ENCODE measurements at regions of chrX and their contacts with region 1.

Region 1: DNA sequence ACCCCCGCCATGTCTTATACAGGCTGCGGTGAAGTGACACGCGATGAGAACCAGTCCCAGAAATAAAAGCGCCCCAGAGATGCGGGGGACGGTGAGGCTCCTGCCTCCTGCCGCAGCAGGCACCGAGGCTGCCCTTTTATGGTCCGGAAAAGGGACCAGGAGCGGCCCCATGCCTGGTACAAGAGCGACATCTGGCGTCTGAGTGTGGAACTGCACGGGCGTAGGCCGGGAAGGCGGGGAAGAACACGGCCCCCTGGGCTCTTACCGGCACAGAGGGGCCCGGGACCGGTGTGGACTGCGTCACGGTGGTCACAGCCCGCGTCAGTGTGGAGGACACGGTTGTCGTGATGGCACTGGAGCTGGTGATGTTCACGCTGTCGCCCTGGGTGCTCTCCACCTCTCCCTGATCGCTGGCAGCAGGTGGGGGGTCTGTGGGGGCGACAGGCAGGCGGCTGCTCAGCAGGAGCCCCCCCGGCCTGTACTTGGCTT is 8.9 kb upstream of the RENBP start:
- DNase-seq: peak; percentile 58 to 68
- ATAC-seq: peak; percentile 38 to 74
- H3K4me3 ChIP-seq: no peak overlapping the region
- H3K27ac ChIP-seq: peak overlapping the region in 1 of 2 experiments; percentile 74; a peak in 2 of 6 replicates
- H3K4me1 ChIP-seq: 0 out of 3 replicates have a peak, but pooled peaks cover 4% of the 10 kb centered on the region
- CTCF ChIP-seq: peak; percentile 70
- EP300 ChIP-seq: no peak
- POLR2A ChIP-seq: no peak
- RAD21 ChIP-seq: peak; percentile 65 to 75

Region 2: GRCh38 chrX:153963546-153963945 is 10.2 kb after region 1 on chrX:
- CTCF ChIA-PET with region 1: interaction called, 47 read pairs
- POLR2A ChIA-PET with region 1: no interaction called
- DNase-seq: no peak
- ATAC-seq: no peak
- H3K4me3 ChIP-seq: no peak overlapping the region
- H3K27ac ChIP-seq: no peak overlapping the region
- H3K4me1 ChIP-seq: peaks cover 8% of the 10 kb centered on the region; the same call in 2 of the 3 replicates
- CTCF ChIP-seq: no peak
- EP300 ChIP-seq: no peak
- POLR2A ChIP-seq: no peak
- RAD21 ChIP-seq: no peak

Region 3: GRCh38 chrX:153970357-153971123 is 17.2 kb after region 1 on chrX:
- CTCF ChIA-PET with region 1: interaction called, 47 read pairs
- POLR2A ChIA-PET with region 1: no interaction called
- DNase-seq: peak in 1 of 2 experiments; percentile 76
- ATAC-seq: peak in 1 of 2 experiments; percentile 49; a peak in 3 of 6 replicates
- H3K4me3 ChIP-seq: peak overlapping the region; percentile 100
- H3K27ac ChIP-seq: peak overlapping the region; percentile 99 to 100
- H3K4me1 ChIP-seq: peaks cover 35% of the 10 kb centered on the region
- CTCF ChIP-seq: no peak
- EP300 ChIP-seq: no peak
- POLR2A ChIP-seq: peak; percentile 12; the same call in 1 of the 2 replicates
- RAD21 ChIP-seq: no peak